ENCODE measurements at regions of chr3 and their contacts with region 1.

Region 1: GRCh38 chr3:50480471-50480870 is 23.0 kb downstream of the CACNA2D2 start:
- DNase-seq: no peak
- ATAC-seq: no peak
- H3K4me3 ChIP-seq: no peak overlapping the region
- H3K4me3 Mint-ChIP-seq: no peak overlapping the region
- H3K27ac ChIP-seq: no peak overlapping the region
- H3K27ac Mint-ChIP-seq: peak overlapping the region; percentile 49 to 69
- H3K4me1 ChIP-seq: peaks cover 3 to 31% of the 10 kb centered on the region in 2 experiments
- H3K4me1 Mint-ChIP-seq: peaks cover 8 to 30% (median 20%) of the 10 kb centered on the region in 3 donors
- H3K27me3 ChIP-seq: no peaks in the 10 kb centered on the region
- H3K27me3 Mint-ChIP-seq: no peaks in the 10 kb centered on the region

Region 2: GRCh38 chr3:50436114-50436674 is 44.3 kb before region 1 on chr3:
- CTCF ChIA-PET with region 1: no interaction called
- POLR2A ChIA-PET with region 1: no interaction called
- DNase-seq: peak; percentile 35 to 84 (median 72)
- ATAC-seq: peak; percentile 82 to 97 (median 89)
- H3K4me3 ChIP-seq: no peak overlapping the region
- H3K4me3 Mint-ChIP-seq: no peak overlapping the region
- H3K27ac ChIP-seq: no peak overlapping the region
- H3K27ac Mint-ChIP-seq: no peak overlapping the region
- H3K4me1 ChIP-seq: peaks cover 0 to 39% of the 10 kb centered on the region in 2 experiments
- H3K4me1 Mint-ChIP-seq: peaks cover 0 to 12% (median 7%) of the 10 kb centered on the region in 3 donors
- H3K27me3 ChIP-seq: peaks cover 0 to 25% of the 10 kb centered on the region in 2 experiments
- H3K27me3 Mint-ChIP-seq: peaks cover 0 to 1% of the 10 kb centered on the region in 2 donors

Region 3: DNA sequence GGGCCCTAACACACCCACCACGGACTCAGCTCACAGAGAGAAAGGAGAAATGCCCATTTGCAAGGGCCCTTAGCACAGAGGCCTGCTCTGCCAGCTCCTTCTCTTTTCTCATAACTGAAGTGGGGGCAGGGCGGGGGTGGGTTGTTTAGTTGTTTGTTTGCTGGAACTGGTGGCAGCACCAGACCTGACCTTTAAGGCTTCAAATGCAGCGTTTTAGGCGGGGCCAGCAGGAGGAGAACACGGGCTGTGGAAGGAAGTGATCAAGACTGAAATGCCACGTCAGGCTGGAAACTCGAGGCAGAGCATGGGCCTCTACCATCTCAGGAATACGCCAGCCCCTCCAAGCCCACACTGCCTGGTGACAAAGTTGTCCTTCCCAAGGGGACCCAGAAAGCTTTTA is 13.7 kb after region 1 on chr3:
- CTCF ChIA-PET with region 1: no interaction called
- POLR2A ChIA-PET with region 1: interaction called in 1 of 2 experiments, 10 read pairs
- DNase-seq: no peak
- ATAC-seq: no peak
- H3K4me3 ChIP-seq: no peak overlapping the region
- H3K4me3 Mint-ChIP-seq: no peak overlapping the region
- H3K27ac ChIP-seq: no peak overlapping the region
- H3K27ac Mint-ChIP-seq: no peak overlapping the region
- H3K4me1 ChIP-seq: peaks cover 0 to 8% of the 10 kb centered on the region in 2 experiments
- H3K4me1 Mint-ChIP-seq: peaks cover 5 to 11% (median 6%) of the 10 kb centered on the region in 3 donors
- H3K27me3 ChIP-seq: peaks cover 0 to 37% of the 10 kb centered on the region in 2 experiments
- H3K27me3 Mint-ChIP-seq: peaks cover 7 to 12% of the 10 kb centered on the region in 2 donors

Measured in T-cell (primary cell).